ENCODE measurements at regions of chr3 and their contacts with region 1.

Region 1: GRCh38 chr3:134212906-134213665 is 37.6 kb downstream of the RYK start:
- DNase-seq: peak; percentile 74
- ATAC-seq: peak; percentile 92
- H3K4me3 ChIP-seq: no peak overlapping the region
- H3K27ac ChIP-seq: no peak overlapping the region
- H3K4me1 ChIP-seq: peaks cover 3% of the 10 kb centered on the region
- H3K27me3 ChIP-seq: no peaks in the 10 kb centered on the region
- CTCF ChIP-seq: peak; percentile 92
- POLR2A ChIP-seq: no peak
- RAD21 ChIP-seq: peak; percentile 89

Region 2: DNA sequence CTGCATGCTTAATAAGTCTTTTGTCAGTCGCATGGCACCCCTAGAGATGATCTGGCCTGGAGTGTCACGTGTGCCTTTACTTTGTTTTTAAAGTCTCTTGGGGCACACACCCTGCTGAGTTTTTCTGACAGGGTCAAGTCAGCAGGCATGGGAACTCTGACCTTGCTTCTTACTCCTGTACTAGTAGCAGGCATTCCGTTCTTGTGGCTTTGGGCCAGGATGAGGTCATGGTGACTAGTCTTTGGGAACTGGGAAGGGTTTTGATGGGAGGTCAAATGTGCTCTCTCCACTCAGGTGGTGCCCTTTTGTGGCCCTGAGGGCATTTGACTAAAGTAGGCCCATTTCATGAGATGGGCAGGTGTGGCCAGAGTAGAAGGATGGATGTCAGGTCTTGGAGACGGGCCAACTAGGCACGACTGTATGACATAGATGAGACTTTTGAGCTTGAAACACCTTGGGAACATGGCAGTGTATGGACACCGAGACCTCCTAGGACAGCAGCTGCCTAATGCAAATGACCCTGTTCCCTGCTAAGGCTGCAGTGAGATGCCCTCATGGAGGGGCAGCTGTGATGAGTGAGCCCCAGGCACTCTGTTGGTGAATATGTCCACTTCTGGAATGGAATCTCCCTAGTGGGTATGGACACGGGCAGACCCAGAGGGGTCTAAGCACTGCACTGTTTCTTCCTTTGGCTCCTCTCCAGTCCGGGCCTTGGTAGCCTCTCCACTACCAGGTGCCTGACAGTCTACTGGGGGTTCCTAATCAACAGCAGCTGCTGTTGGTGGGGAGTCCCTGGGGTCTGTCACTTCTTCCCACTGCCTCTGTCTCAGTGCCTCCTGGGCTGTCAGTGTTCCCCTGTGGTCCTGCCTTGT is 391.1 kb before region 1 on chr3:
- CTCF ChIA-PET with region 1: no interaction called
- POLR2A ChIA-PET with region 1: no interaction called
- dilution Hi-C with region 1: no loop called
- in situ Hi-C with region 1: loop called (anchors 10 kb)
- intact Hi-C with region 1: loop called (anchors 5 kb)
- DNase-seq: peak; percentile 80
- ATAC-seq: peak; percentile 60
- H3K4me3 ChIP-seq: no peak overlapping the region
- H3K27ac ChIP-seq: no peak overlapping the region
- H3K4me1 ChIP-seq: no peaks in the 10 kb centered on the region
- H3K27me3 ChIP-seq: no peaks in the 10 kb centered on the region
- CTCF ChIP-seq: peak; percentile 40
- POLR2A ChIP-seq: no peak
- RAD21 ChIP-seq: peak; percentile 43

Region 3: DNA sequence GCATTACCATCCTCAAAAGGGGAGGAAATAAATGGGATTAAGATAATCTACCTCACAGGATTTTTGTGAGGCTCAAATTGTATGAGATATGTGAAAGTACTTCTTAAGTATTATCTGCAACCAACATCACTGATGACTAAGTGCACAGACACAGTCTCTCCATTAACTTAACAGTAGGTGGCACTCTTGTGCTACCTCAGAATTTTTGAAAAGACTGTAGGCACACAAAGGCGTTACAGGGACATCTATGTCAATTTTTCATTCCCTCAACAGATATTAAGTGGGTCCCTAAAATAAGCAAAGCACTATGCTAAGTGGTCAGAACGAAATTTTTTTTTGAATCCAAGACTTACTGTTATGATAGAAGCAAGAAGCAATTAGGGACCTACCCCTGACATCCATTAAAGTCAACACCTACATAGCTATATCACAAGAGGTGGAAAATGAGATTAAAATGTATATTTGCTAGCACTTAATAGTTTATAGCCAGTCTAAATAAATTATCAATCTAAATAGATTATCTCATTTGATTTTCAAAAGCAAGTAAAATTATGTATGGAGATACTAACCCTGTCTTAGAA is 15.3 kb before region 1 on chr3:
- CTCF ChIA-PET with region 1: interaction called, 37 read pairs
- POLR2A ChIA-PET with region 1: no interaction called
- dilution Hi-C with region 1: no loop called
- in situ Hi-C with region 1: no loop called
- intact Hi-C with region 1: no loop called
- DNase-seq: peak; percentile 83
- ATAC-seq: peak; percentile 71
- H3K4me3 ChIP-seq: no peak overlapping the region
- H3K27ac ChIP-seq: no peak overlapping the region
- H3K4me1 ChIP-seq: peaks cover 10% of the 10 kb centered on the region
- H3K27me3 ChIP-seq: no peaks in the 10 kb centered on the region
- CTCF ChIP-seq: peak; percentile 90
- POLR2A ChIP-seq: no peak
- RAD21 ChIP-seq: peak; percentile 80

Region 4: GRCh38 chr3:134299185-134299887 is 86.2 kb after region 1 on chr3:
- CTCF ChIA-PET with region 1: interaction called, 24 read pairs
- POLR2A ChIA-PET with region 1: no interaction called
- dilution Hi-C with region 1: no loop called
- in situ Hi-C with region 1: no loop called
- intact Hi-C with region 1: loop called (anchors 1 kb)
- DNase-seq: peak; percentile 53
- ATAC-seq: peak; percentile 87
- H3K4me3 ChIP-seq: no peak overlapping the region
- H3K27ac ChIP-seq: no peak overlapping the region
- H3K4me1 ChIP-seq: no peaks in the 10 kb centered on the region
- H3K27me3 ChIP-seq: no peaks in the 10 kb centered on the region
- CTCF ChIP-seq: peak; percentile 49
- POLR2A ChIP-seq: no peak
- RAD21 ChIP-seq: peak; percentile 46

Region 5: GRCh38 chr3:134326760-134327593 is 113.9 kb after region 1 on chr3:
- CTCF ChIA-PET with region 1: no interaction called
- POLR2A ChIA-PET with region 1: no interaction called
- dilution Hi-C with region 1: no loop called
- in situ Hi-C with region 1: no loop called
- intact Hi-C with region 1: no loop called
- DNase-seq: peak; percentile 97
- ATAC-seq: peak; percentile 64
- H3K4me3 ChIP-seq: no peak overlapping the region
- H3K27ac ChIP-seq: peak overlapping the region; percentile 98
- H3K4me1 ChIP-seq: peaks cover 45% of the 10 kb centered on the region
- H3K27me3 ChIP-seq: no peaks in the 10 kb centered on the region
- CTCF ChIP-seq: no peak
- POLR2A ChIP-seq: no peak
- RAD21 ChIP-seq: no peak; the same call in 1 of the 2 replicates

Region 6: GRCh38 chr3:134364061-134364935 is 151.2 kb after region 1 on chr3:
- CTCF ChIA-PET with region 1: no interaction called
- POLR2A ChIA-PET with region 1: no interaction called
- dilution Hi-C with region 1: no loop called
- in situ Hi-C with region 1: no loop called
- intact Hi-C with region 1: loop called (anchors 5 kb)
- DNase-seq: peak; percentile 96
- ATAC-seq: peak; percentile 75
- H3K4me3 ChIP-seq: no peak overlapping the region
- H3K27ac ChIP-seq: peak overlapping the region; percentile 90
- H3K4me1 ChIP-seq: peaks cover 83% of the 10 kb centered on the region
- H3K27me3 ChIP-seq: no peaks in the 10 kb centered on the region
- CTCF ChIP-seq: no peak
- POLR2A ChIP-seq: peak; percentile 43
- RAD21 ChIP-seq: peak; percentile 10; the same call in 1 of the 2 replicates

Region 7: DNA sequence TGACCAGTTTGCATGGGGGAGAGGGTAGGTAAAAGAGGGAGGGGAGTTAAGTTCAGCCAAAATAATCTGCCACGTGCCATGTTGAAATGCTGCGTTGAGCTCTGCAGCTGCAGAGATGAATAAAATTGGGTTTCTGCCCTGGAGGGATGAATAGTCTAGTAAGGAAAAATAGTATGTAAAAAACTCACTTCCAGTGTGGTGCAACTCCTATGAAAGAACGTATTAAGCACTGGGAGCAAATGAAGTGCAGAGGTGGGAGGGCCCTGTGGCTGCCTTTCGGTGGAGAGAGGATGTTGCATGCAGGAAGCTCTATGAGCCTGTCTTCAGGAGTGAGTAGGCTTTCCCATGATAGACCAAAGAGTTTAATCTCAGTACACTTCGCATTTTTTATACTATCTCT is 281.4 kb after region 1 on chr3:
- CTCF ChIA-PET with region 1: no interaction called
- POLR2A ChIA-PET with region 1: no interaction called
- dilution Hi-C with region 1: no loop called
- in situ Hi-C with region 1: no loop called
- intact Hi-C with region 1: loop called (anchors 5 kb)
- DNase-seq: no peak
- ATAC-seq: no peak
- H3K4me3 ChIP-seq: no peak overlapping the region
- H3K27ac ChIP-seq: no peak overlapping the region
- H3K4me1 ChIP-seq: peaks cover 4% of the 10 kb centered on the region; the same call in 1 of the 2 replicates
- H3K27me3 ChIP-seq: no peaks in the 10 kb centered on the region
- CTCF ChIP-seq: no peak
- POLR2A ChIP-seq: no peak
- RAD21 ChIP-seq: no peak

Measured in IMR-90 (cell line).